ENCODE measurements at regions of chrX and their contacts with region 1.

Region 1: GRCh38 chrX:108224727-108225621 is 133.4 kb downstream of the ATG4A start:
- DNase-seq: peak in 4 of 9 donors; percentile 1 to 20 (median 8)
- ATAC-seq: no peak
- H3K4me3 ChIP-seq: no peak overlapping the region
- H3K4me3 Mint-ChIP-seq: peak overlapping the region in 5 of 10 donors; percentile 3 to 44 (median 7)
- H3K27ac ChIP-seq: no peak overlapping the region
- H3K27ac Mint-ChIP-seq: no peak overlapping the region
- H3K4me1 ChIP-seq: no peaks in the 10 kb centered on the region
- H3K4me1 Mint-ChIP-seq: peaks cover 0 to 4% (median 4%) of the 10 kb centered on the region in 7 donors
- H3K27me3 ChIP-seq: no peaks in the 10 kb centered on the region
- H3K27me3 Mint-ChIP-seq: peaks cover 0 to 13% (median 6%) of the 10 kb centered on the region in 5 donors

Region 2: DNA sequence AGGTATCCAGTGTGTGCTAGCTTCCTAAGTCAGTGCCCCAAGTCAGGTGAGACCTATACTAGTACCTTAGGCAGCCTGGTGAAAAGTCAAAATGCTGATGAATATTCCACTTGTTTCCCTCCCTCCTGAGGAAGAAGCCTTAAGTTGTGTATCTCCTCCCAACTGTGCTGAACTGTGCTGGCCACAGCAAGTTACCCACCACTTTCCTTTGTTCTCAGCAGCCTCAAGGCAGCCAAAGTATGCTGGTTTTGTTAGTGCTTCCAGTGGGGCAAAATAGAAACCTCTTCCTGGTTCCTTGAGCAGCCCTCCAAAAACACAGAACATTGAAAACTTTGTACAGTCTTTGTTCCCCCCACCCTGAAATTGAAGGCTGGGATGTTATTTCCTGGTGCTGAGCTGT is 119.5 kb before region 1 on chrX:
- CTCF ChIA-PET with region 1: no interaction called
- POLR2A ChIA-PET with region 1: no interaction called
- intact Hi-C with region 1: no loop called
- DNase-seq: no peak
- ATAC-seq: no peak
- H3K4me3 ChIP-seq: no peak overlapping the region
- H3K4me3 Mint-ChIP-seq: no peak overlapping the region
- H3K27ac ChIP-seq: no peak overlapping the region
- H3K27ac Mint-ChIP-seq: no peak overlapping the region
- H3K4me1 ChIP-seq: no peaks in the 10 kb centered on the region
- H3K4me1 Mint-ChIP-seq: peaks cover 2 to 10% (median 5%) of the 10 kb centered on the region in 7 donors
- H3K27me3 ChIP-seq: no peaks in the 10 kb centered on the region
- H3K27me3 Mint-ChIP-seq: no peaks in the 10 kb centered on the region

Region 3: GRCh38 chrX:108537005-108537404 is 312.0 kb after region 1 on chrX:
- CTCF ChIA-PET with region 1: no interaction called
- POLR2A ChIA-PET with region 1: no interaction called
- intact Hi-C with region 1: loop called in 1 of 2 experiments (anchors 5 kb)
- DNase-seq: no peak
- ATAC-seq: no peak
- H3K4me3 ChIP-seq: no peak overlapping the region
- H3K4me3 Mint-ChIP-seq: no peak overlapping the region
- H3K27ac ChIP-seq: no peak overlapping the region
- H3K27ac Mint-ChIP-seq: no peak overlapping the region
- H3K4me1 ChIP-seq: no peaks in the 10 kb centered on the region
- H3K4me1 Mint-ChIP-seq: no peaks in the 10 kb centered on the region
- H3K27me3 ChIP-seq: no peaks in the 10 kb centered on the region
- H3K27me3 Mint-ChIP-seq: no peaks in the 10 kb centered on the region

Region 4: DNA sequence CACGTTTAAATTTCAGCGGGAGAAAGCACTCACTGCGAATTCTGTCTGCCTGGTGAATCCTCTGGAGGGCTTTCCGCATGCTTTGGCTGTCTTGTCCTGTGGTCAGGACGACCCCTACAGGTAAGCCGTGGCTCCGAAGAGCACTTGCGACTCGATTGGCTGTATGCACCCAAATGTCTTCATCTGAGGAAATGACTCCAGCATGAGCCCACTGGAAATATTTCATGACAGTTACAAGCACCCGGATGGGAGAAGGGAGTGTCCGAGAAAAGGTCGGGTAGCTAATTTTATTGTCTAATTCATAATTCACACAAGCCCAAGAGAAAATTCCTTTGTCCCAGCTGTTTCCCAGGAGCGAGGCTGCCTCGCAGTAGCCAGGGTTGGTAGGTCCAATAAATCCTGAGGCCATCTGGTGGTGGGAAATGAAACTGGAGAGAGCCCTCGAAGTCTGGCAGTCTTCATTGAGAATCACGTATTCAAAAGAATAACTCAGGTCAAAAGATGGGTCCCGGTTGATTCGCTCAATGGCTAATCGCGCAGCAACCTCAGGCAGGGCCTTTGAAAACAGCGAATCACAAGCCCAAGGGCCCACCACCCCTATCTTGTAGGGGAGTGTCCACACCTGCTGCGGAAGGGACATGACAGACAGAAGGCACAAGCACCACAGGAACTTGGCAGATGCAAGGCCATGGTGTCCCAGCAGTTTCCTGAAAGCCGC is 1250.4 kb after region 1 on chrX:
- CTCF ChIA-PET with region 1: no interaction called
- POLR2A ChIA-PET with region 1: no interaction called
- intact Hi-C with region 1: loop called in 1 of 2 experiments (anchors 10 kb)
- DNase-seq: peak in 2 of 9 donors; percentile 2 to 3
- ATAC-seq: no peak
- H3K4me3 ChIP-seq: no peak overlapping the region
- H3K4me3 Mint-ChIP-seq: no peak overlapping the region
- H3K27ac ChIP-seq: no peak overlapping the region
- H3K27ac Mint-ChIP-seq: no peak overlapping the region
- H3K4me1 ChIP-seq: no peaks in the 10 kb centered on the region
- H3K4me1 Mint-ChIP-seq: peaks cover 3 to 10% (median 7%) of the 10 kb centered on the region in 7 donors
- H3K27me3 ChIP-seq: no peaks in the 10 kb centered on the region
- H3K27me3 Mint-ChIP-seq: no peaks in the 10 kb centered on the region